Naive thymus-derived CD4-positive, alpha-beta T cell (primary cell): ENCODE measurements at regions of chr2 and their contacts with region 1.

Region 1: DNA sequence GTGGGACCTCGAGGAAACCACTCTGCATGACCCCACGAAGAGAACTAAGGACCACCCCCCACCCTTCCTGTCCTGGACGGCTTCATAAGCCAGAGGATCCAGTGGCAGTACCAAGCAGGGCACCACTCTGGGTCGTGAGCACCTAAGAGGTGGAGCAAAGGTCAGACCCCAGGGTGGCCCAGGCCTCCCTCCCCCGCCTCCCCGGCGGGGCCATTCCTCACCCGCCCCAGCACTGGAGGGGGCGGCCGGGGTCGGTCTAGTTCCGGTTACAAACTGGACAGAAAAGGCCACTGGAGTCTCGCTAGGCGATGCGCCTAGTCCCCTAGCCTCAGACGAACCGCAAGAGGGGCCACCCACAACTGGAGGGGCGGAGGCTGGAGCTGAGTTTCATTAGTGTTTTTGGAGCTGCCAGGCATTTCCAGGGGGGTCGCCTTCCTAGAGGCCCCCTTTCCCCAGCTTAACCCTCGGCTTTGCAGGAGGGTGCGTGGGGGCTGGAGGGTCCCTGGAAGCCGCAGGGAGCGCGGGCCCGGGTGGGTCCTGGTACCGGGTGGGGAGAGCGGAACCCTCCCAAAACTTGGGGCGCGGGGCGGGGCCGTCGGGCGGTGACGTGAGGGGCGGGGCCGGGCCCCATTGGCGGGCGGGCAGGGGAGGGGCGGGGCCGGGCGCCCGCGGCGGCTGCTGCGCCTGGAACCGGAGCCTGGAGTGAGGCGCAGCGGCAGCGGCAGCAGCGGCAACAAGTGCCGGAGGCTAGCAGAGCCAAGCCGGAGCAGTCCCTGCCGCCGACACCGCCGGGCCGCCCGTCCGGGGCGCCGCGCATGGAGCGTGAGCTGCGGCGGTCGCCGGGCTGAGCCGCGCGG is at the start of gene B3GNT2:
- DNase-seq: peak; percentile 66 to 88 (median 80)
- ATAC-seq: peak; percentile 89
- H3K4me3 ChIP-seq: peak within 1 kb of the TSS; percentile 98
- H3K4me3 Mint-ChIP-seq: peak within 1 kb of the TSS; percentile 82 to 93 (median 89)
- H3K27ac ChIP-seq: peak within 1 kb of the TSS; percentile 86
- H3K27ac Mint-ChIP-seq: peak within 1 kb of the TSS in 7 of 9 donors; percentile 83 to 95 (median 91)
- H3K4me1 ChIP-seq: peaks cover 27 to 36% of the 10 kb centered on the region in 2 donors
- H3K4me1 Mint-ChIP-seq: peaks cover 28 to 44% (median 31%) of the 10 kb centered on the region in 7 donors
- H3K27me3 ChIP-seq: no peaks in the 10 kb centered on the region
- H3K27me3 Mint-ChIP-seq: peaks cover 0 to 6% (median 0%) of the 10 kb centered on the region in 5 donors
- total RNA-seq, gene B3GNT2: 16.9 to 37.0 (median 34.7) TPM

Region 2: DNA sequence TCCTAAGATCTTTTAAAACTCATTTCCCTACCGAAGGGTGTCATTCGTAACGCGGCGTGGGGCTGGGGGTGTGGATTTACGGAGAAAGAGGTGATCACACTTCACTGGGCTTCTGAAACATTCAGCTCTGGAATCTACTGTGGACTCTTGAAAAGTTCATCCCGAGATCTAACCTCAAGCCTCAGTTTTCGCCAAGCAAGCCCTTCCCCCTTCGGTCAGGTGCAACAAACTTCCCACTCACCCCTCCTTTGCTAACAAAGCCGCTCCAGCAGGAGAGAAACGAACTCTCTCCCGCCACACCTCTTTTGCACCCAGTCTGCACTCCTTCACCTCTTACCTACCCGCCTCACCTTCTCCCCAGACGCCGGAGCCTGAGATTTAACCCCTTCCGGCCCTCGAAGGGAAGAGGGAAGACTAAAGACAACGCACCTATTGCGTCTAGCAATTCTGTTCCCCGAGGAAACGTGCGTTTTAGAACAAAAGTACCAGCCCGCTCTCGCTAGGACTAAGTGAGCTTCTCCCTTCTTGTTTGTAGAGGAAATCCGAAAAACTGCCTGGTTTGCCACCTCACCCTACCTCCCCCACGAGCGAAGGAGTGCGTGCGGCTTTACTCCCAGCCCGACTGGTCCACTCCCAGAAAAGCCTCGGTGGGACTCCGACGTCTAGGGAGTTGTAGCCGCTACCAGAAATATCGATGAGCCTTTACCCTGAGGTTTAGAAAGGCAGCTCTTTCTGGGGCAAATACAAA is 1178.7 kb before region 1 on chr2:
- CTCF ChIA-PET with region 1: no interaction called
- POLR2A ChIA-PET with region 1: no interaction called
- intact Hi-C with region 1: loop called (anchors 2 to 5 kb)
- DNase-seq: peak; percentile 41 to 75 (median 72)
- ATAC-seq: peak; percentile 79
- H3K4me3 ChIP-seq: peak overlapping the region; percentile 100
- H3K4me3 Mint-ChIP-seq: peak overlapping the region; percentile 93 to 100 (median 97)
- H3K27ac ChIP-seq: peak overlapping the region; percentile 75
- H3K27ac Mint-ChIP-seq: peak overlapping the region; percentile 90 to 99 (median 95)
- H3K4me1 ChIP-seq: peaks cover 14 to 20% of the 10 kb centered on the region in 2 donors
- H3K4me1 Mint-ChIP-seq: peaks cover 23 to 68% (median 48%) of the 10 kb centered on the region in 7 donors
- H3K27me3 ChIP-seq: no peaks in the 10 kb centered on the region
- H3K27me3 Mint-ChIP-seq: no peaks in the 10 kb centered on the region

Region 3: DNA sequence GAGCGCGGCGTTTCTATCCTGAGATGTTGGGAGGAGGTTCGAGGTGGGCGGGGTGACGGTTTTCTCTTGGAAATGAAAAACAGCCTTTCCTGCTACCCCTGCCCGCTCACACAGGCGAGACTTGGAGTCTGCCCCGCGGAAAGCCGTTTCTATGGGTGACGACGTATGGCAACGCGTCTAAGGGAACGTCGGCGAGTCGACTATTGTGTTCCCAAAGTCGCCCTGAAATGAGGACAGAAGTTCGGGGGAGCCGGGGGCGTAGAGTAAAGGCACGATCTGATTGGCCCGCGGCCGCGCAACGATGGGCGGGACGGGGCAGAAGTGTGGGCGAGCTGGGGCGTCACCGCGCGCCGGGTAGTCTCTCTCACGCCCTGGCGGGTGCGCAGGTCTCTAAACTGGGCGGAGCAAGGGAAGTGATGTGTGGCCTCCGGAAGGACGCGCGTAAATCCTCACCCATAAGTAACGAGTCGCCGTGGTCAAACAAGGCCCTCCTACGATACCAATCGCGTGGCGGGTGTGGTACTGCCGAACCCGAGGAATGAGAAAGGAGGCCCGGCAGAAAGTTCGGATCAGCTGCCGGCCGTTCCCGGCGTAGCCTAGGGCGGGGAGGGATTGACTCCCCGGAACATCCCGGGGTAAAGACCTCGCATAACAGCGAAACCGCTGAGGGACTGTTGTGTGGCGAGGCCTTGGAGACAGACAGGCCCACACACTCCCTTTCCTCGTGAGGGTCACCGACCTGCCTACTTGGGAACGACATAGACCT is 431.4 kb before region 1 on chr2:
- CTCF ChIA-PET with region 1: no interaction called
- POLR2A ChIA-PET with region 1: no interaction called
- intact Hi-C with region 1: loop called (anchors 1 to 10 kb)
- DNase-seq: peak; percentile 89 to 98 (median 97)
- ATAC-seq: peak; percentile 99
- H3K4me3 ChIP-seq: peak overlapping the region; percentile 71
- H3K4me3 Mint-ChIP-seq: peak overlapping the region; percentile 80 to 98 (median 95)
- H3K27ac ChIP-seq: peak overlapping the region; percentile 93
- H3K27ac Mint-ChIP-seq: peak overlapping the region; percentile 94 to 99 (median 98)
- H3K4me1 ChIP-seq: peaks cover 6 to 9% of the 10 kb centered on the region in 2 donors
- H3K4me1 Mint-ChIP-seq: peaks cover 0 to 16% (median 10%) of the 10 kb centered on the region in 7 donors
- H3K27me3 ChIP-seq: no peaks in the 10 kb centered on the region
- H3K27me3 Mint-ChIP-seq: peaks cover 0 to under 1% (median 0%) of the 10 kb centered on the region in 5 donors

Region 4: DNA sequence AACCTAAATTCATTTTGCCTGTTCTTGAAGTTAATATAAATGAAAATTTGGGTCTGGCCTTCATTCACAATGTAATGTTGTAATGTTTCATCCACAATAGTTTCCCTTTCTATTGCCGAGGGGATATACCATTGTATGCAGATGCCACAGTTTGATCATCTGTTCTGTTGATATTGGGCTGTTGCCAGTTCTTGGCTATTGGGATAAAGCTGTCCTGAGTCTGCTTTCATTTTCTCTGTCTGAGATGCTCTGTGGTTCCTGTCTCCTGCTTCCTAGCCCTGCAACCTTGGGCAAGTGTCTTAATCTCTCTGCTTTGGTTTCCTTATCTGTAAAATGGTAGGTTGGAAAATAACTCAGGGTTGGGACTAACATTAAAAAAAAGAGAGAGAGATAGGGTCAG is 25.5 kb after region 1 on chr2:
- CTCF ChIA-PET with region 1: no interaction called
- POLR2A ChIA-PET with region 1: no interaction called
- intact Hi-C with region 1: loop called (anchors 2 kb)
- DNase-seq: no peak
- ATAC-seq: no peak
- H3K4me3 ChIP-seq: no peak overlapping the region
- H3K4me3 Mint-ChIP-seq: peak overlapping the region in 2 of 10 donors; percentile 2 to 26
- H3K27ac ChIP-seq: no peak overlapping the region
- H3K27ac Mint-ChIP-seq: peak overlapping the region in 7 of 9 donors; percentile 2 to 76 (median 63)
- H3K4me1 ChIP-seq: peaks cover 12 to 54% of the 10 kb centered on the region in 2 donors
- H3K4me1 Mint-ChIP-seq: peaks cover 31 to 81% (median 68%) of the 10 kb centered on the region in 7 donors
- H3K27me3 ChIP-seq: no peaks in the 10 kb centered on the region
- H3K27me3 Mint-ChIP-seq: no peaks in the 10 kb centered on the region

Region 5: DNA sequence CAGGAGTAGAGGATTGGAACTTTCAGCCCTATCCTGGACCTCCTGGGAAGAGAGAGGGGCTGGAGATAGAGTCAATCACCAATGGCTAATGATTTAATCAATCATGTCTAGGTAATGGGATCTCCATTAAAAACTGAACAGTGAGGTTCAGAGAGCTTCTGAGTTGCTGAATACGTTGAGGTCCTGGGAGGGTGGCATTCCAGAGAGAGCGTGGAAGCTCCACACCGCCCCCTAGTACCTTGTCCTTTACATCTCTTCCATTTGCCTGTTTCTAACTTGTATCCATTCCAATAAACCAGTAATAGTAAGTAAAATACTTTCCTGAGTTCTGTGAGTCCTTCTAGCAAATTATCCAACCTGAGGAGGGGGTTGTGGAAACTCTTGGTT is 102.0 kb after region 1 on chr2:
- CTCF ChIA-PET with region 1: no interaction called
- POLR2A ChIA-PET with region 1: no interaction called
- intact Hi-C with region 1: no loop called
- DNase-seq: no peak
- ATAC-seq: no peak
- H3K4me3 ChIP-seq: no peak overlapping the region
- H3K4me3 Mint-ChIP-seq: no peak overlapping the region
- H3K27ac ChIP-seq: no peak overlapping the region
- H3K27ac Mint-ChIP-seq: no peak overlapping the region
- H3K4me1 ChIP-seq: peaks cover 0 to 18% of the 10 kb centered on the region in 2 donors
- H3K4me1 Mint-ChIP-seq: peaks cover 2 to 7% (median 4%) of the 10 kb centered on the region in 7 donors
- H3K27me3 ChIP-seq: no peaks in the 10 kb centered on the region
- H3K27me3 Mint-ChIP-seq: peaks cover 0 to 6% (median 0%) of the 10 kb centered on the region in 5 donors

Region 6: DNA sequence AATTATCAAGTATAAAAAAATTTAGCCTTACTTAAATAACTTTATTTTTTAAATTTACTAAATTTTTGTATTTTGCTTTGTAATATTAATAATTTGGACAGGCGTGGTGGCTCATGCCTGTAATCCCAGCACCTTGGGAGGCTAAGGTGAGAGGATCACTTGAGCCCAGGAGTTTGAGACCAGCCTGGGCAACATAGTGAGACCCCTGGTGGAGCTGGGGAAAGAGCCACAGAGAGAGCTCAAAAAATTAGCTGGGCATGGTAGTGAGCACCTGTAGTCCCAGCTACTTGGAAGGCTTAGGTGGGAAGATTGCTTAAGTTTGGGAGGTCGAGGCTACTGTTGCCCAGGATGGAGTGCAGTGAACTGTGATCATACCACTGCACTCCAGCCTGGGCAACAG is 143.8 kb after region 1 on chr2:
- CTCF ChIA-PET with region 1: no interaction called
- POLR2A ChIA-PET with region 1: no interaction called
- intact Hi-C with region 1: loop called in 1 of 2 experiments (anchors 1 kb)
- DNase-seq: no peak
- ATAC-seq: no peak
- H3K4me3 ChIP-seq: no peak overlapping the region
- H3K4me3 Mint-ChIP-seq: no peak overlapping the region
- H3K27ac ChIP-seq: no peak overlapping the region
- H3K27ac Mint-ChIP-seq: no peak overlapping the region
- H3K4me1 ChIP-seq: peaks cover 0 to 2% of the 10 kb centered on the region in 2 donors
- H3K4me1 Mint-ChIP-seq: peaks cover 0 to 7% (median 0%) of the 10 kb centered on the region in 7 donors
- H3K27me3 ChIP-seq: no peaks in the 10 kb centered on the region
- H3K27me3 Mint-ChIP-seq: no peaks in the 10 kb centered on the region

Region 7: GRCh38 chr2:63841254-63842022 is 1645.8 kb after region 1 on chr2 and contains the start of gene UGP2:
- CTCF ChIA-PET with region 1: no interaction called
- POLR2A ChIA-PET with region 1: no interaction called
- intact Hi-C with region 1: loop called in 1 of 2 experiments (anchors 2 kb)
- DNase-seq: peak; percentile 68 to 89 (median 83)
- ATAC-seq: peak; percentile 77
- H3K4me3 ChIP-seq: peak within 1 kb of the TSS; percentile 82
- H3K4me3 Mint-ChIP-seq: peak within 1 kb of the TSS; percentile 97 to 100 (median 99)
- H3K27ac ChIP-seq: peak within 1 kb of the TSS; percentile 90
- H3K27ac Mint-ChIP-seq: peak within 1 kb of the TSS; percentile 95 to 99 (median 97)
- H3K4me1 ChIP-seq: peaks cover 5 to 24% of the 10 kb centered on the region in 2 donors
- H3K4me1 Mint-ChIP-seq: peaks cover 27 to 60% (median 53%) of the 10 kb centered on the region in 7 donors
- H3K27me3 ChIP-seq: no peaks in the 10 kb centered on the region
- H3K27me3 Mint-ChIP-seq: peaks cover 0 to 14% (median 0%) of the 10 kb centered on the region in 5 donors
- total RNA-seq, gene UGP2: 69.5 to 134 (median 92.4) TPM